ENCODE measurements at regions of chr20 and their contacts with region 1.

Region 1: GRCh38 chr20:10536531-10536930 is 101.4 kb downstream of the SLX4IP start:
- DNase-seq: peak; percentile 46 to 60
- H3K4me3 ChIP-seq: no peak overlapping the region
- H3K4me3 Mint-ChIP-seq: no peak overlapping the region
- H3K27ac Mint-ChIP-seq: no peak overlapping the region
- H3K4me1 ChIP-seq: peaks cover 17% of the 10 kb centered on the region
- H3K4me1 Mint-ChIP-seq: peaks cover 14% of the 10 kb centered on the region
- H3K27me3 ChIP-seq: no peaks in the 10 kb centered on the region
- H3K27me3 Mint-ChIP-seq: no peaks in the 10 kb centered on the region
- CTCF ChIP-seq: peak; percentile 56 to 76

Region 2: DNA sequence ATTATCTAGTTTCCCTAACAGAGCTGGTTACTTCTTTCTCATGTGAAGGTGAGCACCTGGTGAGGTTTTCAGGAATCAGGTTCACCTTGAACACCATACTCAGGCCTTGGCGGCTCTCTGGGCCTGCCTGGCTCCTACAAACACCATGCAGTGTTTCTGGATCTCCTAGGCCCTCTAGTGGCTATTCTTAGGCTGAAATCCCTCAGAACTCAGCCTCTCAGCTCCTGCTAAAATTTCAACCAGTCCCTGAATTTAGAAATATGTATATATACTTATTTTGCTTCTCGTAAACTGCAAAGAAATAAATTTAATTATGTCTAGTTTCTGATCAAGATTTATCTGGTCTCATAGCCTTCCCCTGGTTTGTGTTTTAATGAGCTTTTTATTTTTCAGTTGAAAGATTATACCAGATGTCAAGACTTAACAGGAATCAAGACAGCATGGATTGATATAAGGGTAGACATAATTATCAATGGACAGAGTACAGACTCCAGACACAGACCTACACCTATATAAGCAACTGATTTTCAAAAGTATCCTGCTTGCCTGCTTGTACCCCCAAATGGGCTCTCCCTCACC is 445.9 kb before region 1 on chr20:
- CTCF ChIA-PET with region 1: interaction called, 10 read pairs
- POLR2A ChIA-PET with region 1: no interaction called
- intact Hi-C with region 1: no loop called
- DNase-seq: peak; percentile 48 to 60
- H3K4me3 ChIP-seq: no peak overlapping the region
- H3K4me3 Mint-ChIP-seq: no peak overlapping the region
- H3K27ac Mint-ChIP-seq: no peak overlapping the region
- H3K4me1 ChIP-seq: no peaks in the 10 kb centered on the region
- H3K4me1 Mint-ChIP-seq: no peaks in the 10 kb centered on the region
- H3K27me3 ChIP-seq: no peaks in the 10 kb centered on the region
- H3K27me3 Mint-ChIP-seq: peaks cover 6% of the 10 kb centered on the region
- CTCF ChIP-seq: peak; percentile 70 to 86

Region 3: DNA sequence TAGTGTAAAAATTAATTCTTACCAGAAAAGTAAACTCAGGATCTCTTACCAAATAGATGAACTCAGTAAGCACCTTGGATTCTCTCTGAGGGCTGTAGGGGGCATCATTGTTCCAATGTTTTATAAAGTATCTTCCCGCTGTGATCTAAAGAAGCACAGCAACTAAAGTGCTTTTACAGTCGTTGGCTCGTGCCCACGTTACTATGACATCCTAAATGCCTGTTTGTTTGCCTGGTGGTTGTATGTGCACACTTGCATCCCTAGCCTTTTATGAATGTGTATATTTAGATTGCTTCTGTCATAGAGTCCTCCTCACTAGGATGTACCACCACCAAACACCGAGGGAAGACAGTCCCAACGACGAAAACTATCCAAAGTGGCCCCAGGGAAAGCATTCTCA is 66.9 kb before region 1 on chr20:
- CTCF ChIA-PET with region 1: no interaction called
- POLR2A ChIA-PET with region 1: no interaction called
- intact Hi-C with region 1: loop called (anchors 2 kb)
- DNase-seq: no peak
- H3K4me3 ChIP-seq: no peak overlapping the region
- H3K4me3 Mint-ChIP-seq: no peak overlapping the region
- H3K27ac Mint-ChIP-seq: no peak overlapping the region
- H3K4me1 ChIP-seq: peaks cover 19% of the 10 kb centered on the region; the same call in 1 of the 2 replicates
- H3K4me1 Mint-ChIP-seq: peaks cover 25% of the 10 kb centered on the region
- H3K27me3 ChIP-seq: no peaks in the 10 kb centered on the region
- H3K27me3 Mint-ChIP-seq: no peaks in the 10 kb centered on the region
- CTCF ChIP-seq: peak; percentile 19 to 21